ENCODE measurements at regions of chr12 and their contacts with region 1.

Region 1: GRCh38 chr12:106710143-106710893 is 64.2 kb upstream of the RIC8B start:
- DNase-seq: no peak
- H3K4me3 ChIP-seq: no peak overlapping the region
- H3K27ac ChIP-seq: no peak overlapping the region
- H3K27me3 ChIP-seq: no peaks in the 10 kb centered on the region
- CTCF ChIP-seq: no peak

Region 2: GRCh38 chr12:106581543-106582248 is 128.6 kb before region 1 on chr12:
- intact Hi-C with region 1: loop called in 1 of 2 experiments (anchors 10 kb)
- DNase-seq: no peak
- H3K4me3 ChIP-seq: peak overlapping the region in 57 of 59 donors; percentile 17 to 74 (median 53)
- H3K27ac ChIP-seq: peak overlapping the region in 45 of 59 donors; percentile 26 to 83 (median 66)
- H3K27me3 ChIP-seq: peaks cover 0 to 83% (median 68%) of the 10 kb centered on the region in 45 donors
- CTCF ChIP-seq: no peak

Measured in dorsolateral prefrontal cortex (tissue), 120 donors.